Activated T-helper 1 cell treated with anti-CD3 and anti-CD28 coated beads, Interleukin-12 subunit alpha, Interleukin-12 subunit beta, Interleukin-2, Interleukin-4 antibody, amounts not matched to agents 30 ng/mL and 10 ng/mL and 1 ng/mL, durations not matched to agents 14 hours and 24 hours and 36 hours (primary cell): ENCODE measurements at regions of chr5 and their contacts with region 1.

Region 1: DNA sequence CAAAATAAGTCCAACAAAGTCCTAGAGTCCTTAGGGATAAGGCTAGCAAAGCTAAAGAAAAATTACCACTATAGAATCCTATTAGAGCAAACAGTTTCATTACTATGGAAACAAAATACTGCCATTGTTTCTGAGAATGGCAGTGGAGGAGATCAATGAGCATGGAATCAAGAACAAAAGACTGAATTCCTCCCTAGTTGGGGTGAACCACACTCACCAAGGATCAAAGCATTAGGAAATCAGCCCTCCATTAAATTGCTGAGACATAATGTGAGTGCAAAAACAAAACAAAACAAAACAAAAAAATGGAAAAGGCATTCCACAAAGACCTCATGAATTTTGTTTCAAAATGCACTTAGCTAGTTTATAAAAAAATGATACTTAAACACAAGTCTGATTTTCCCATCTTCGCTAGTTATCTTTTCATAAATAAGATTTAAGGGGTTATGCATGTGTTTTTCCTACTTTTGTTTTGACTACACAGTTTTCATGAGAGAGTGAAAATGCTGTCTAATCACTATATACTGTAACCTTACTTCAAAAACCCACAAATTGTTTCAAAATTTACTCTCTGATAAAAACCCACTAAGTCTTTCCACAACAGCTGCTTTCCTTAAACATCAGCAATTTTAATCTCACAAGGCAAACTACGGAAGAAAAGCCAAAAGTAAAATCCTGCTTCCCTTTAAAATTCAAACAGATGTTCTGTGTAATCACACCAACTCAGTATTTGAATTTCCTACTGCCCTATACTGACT is 9.7 kb downstream of the SERINC5 start:
- DNase-seq: no peak
- H3K4me3 Mint-ChIP-seq: peak overlapping the region; percentile 23
- H3K27ac Mint-ChIP-seq: peak overlapping the region; percentile 87
- H3K4me1 Mint-ChIP-seq: peaks cover 43% of the 10 kb centered on the region
- H3K27me3 Mint-ChIP-seq: no peaks in the 10 kb centered on the region

Region 2: DNA sequence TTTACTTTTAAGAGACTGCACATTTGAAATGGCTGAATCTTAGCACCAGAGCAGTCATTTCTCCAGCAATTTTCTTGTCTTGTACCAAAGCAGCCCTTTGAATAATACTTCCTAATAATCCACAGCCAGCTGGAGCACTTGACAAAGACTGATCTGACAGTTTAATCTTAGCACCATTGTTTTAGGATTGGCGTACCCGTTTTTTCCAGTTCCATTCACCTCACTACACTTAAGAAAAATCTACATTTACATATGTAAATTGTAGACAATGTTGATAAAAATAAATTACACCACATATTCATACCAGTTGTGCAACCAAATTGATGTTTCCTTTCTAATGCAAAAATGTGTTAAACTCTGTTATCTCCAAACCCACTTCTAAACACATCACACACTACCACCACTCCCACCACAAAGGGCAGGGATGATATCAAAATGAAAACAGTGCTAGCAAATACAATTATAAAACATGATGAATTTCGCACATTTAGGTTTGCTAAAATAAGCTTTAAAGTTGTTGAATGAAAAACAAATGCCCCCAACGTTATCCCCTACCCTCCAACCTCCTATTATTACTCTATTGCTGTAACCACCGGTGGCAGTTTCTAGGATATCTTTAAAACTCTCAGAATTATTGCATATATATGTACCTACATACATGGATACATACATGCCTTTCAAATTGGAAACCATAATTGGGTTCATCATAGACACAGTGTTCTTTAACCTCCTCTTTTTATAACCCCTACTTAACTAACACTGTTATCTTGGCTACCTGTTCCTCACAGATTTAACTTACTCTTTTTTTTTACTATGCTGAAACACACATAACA is 11.8 kb before region 1 on chr5:
- intact Hi-C with region 1: loop called (anchors 1 kb)
- DNase-seq: no peak
- H3K4me3 Mint-ChIP-seq: no peak overlapping the region
- H3K27ac Mint-ChIP-seq: peak overlapping the region; percentile 25
- H3K4me1 Mint-ChIP-seq: peaks cover 35% of the 10 kb centered on the region
- H3K27me3 Mint-ChIP-seq: no peaks in the 10 kb centered on the region

Region 3: GRCh38 chr5:80269991-80270438 is 23.8 kb after region 1 on chr5:
- intact Hi-C with region 1: loop called (anchors 1 kb)
- DNase-seq: no peak
- H3K4me3 Mint-ChIP-seq: peak overlapping the region; percentile 40
- H3K27ac Mint-ChIP-seq: peak overlapping the region; percentile 96
- H3K4me1 Mint-ChIP-seq: peaks cover 32% of the 10 kb centered on the region
- H3K27me3 Mint-ChIP-seq: no peaks in the 10 kb centered on the region

Region 4: GRCh38 chr5:80871541-80871961 is 625.4 kb after region 1 on chr5:
- intact Hi-C with region 1: loop called (anchors 5 kb)
- DNase-seq: no peak
- H3K4me3 Mint-ChIP-seq: no peak overlapping the region
- H3K27ac Mint-ChIP-seq: peak overlapping the region; percentile 55
- H3K4me1 Mint-ChIP-seq: peaks cover 34% of the 10 kb centered on the region
- H3K27me3 Mint-ChIP-seq: no peaks in the 10 kb centered on the region